ENCODE measurements at regions of chr1 and their contacts with region 1.

Region 1: DNA sequence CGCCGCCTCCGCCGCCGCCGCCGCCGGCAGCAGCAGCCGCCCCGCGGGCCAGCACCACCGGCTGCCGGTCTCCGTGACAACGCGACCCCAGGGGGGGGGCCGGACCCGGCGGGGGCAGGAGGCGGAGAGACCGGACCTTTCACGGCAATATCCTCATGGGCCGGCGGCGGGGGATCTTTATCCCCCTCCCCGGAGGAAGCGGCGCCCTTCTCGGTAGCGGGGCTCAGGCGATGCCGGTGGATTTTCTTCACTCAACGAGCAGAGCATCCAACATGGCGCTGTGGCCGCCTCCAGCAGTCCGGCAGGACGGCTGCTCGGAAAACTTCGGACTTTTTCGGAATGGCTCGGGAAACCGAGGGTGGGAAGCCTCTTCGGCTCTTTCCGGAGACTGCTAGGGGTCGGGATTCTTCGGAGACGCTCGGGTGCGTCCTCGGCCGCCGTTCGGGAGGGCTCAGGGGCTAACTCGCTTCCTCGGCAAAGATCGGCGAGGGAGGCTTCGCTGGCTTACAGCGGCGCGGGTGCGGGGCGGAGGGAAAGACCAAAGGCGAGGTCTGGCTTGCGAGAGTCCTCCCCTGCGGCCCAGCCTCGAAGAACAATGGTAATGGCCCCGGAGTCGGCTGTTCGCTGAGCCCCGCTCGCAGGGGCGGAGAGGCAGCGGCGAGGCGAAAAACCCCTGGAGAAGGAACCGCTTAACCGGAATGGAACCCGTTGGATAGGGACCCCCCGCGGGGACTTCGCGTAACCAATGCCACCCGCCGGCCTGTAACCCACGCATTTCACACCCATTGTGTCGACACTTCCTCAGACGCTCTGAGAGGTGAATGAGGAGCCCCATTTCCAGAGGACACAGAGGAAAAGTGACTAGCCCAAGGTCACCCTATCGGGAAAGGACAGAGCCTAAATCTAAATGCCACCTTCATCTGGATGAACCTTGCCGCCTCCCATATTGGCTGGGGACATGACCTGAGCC is at the start of gene EIF4G3:
- DNase-seq: peak; percentile 98 to 100 (median 99)

Region 2: GRCh38 chr1:20786253-20787028 is 390.4 kb before region 1 on chr1:
- intact Hi-C with region 1: loop called (anchors 5 kb)
- DNase-seq: peak; percentile 89 to 99 (median 92)

Region 3: GRCh38 chr1:21117597-21118001 is 59.3 kb before region 1 on chr1:
- intact Hi-C with region 1: loop called (anchors 10 kb)
- DNase-seq: no peak

Measured in posterior cingulate gyrus (tissue), 11 donors.